ENCODE measurements at regions of chr4 and their contacts with region 1.

Region 1: DNA sequence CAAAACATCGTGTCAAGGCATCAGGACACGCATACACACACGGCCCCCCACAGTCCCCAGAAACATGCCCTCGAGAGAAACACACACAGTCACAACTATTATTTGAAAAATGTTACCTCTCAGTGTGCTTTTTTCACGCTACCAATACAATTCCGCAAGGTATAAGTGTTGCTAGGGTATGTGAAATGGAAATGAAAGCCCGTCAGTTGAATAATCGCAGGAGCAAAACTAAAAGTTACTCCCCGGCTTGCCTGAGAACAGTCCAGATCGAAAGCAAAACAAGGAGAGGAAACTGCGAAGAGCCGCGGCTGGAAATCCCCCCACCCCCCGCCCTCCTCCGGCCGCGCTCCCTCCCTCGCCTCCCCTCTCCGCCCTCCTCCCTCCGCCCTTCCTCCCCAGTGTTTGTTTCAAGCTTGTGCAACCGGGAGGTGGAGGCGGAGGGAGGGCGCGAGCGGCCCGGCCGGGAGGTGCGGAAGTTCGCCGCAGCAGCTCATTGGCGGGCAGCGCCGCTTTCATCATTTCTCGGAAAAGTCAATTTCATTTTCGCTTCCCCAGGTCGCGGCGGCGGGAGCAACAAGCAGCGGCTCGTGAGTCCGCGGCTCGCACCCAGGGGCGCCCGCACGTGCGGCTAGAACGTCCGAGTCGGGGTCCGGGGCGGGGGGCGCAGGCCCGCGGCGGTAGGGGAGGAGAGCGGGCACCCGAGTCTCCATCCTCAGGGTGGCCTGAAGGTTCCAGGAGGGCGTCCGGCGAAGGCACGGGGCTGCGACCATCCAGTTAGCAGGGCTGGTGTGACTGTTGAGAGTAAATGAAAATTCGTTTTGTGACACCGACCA is at the start of gene IRF2:
- DNase-seq: peak; percentile 98
- ATAC-seq: peak; percentile 90 to 94
- total RNA-seq, gene IRF2: 27.1 to 30.0 TPM

Region 2: DNA sequence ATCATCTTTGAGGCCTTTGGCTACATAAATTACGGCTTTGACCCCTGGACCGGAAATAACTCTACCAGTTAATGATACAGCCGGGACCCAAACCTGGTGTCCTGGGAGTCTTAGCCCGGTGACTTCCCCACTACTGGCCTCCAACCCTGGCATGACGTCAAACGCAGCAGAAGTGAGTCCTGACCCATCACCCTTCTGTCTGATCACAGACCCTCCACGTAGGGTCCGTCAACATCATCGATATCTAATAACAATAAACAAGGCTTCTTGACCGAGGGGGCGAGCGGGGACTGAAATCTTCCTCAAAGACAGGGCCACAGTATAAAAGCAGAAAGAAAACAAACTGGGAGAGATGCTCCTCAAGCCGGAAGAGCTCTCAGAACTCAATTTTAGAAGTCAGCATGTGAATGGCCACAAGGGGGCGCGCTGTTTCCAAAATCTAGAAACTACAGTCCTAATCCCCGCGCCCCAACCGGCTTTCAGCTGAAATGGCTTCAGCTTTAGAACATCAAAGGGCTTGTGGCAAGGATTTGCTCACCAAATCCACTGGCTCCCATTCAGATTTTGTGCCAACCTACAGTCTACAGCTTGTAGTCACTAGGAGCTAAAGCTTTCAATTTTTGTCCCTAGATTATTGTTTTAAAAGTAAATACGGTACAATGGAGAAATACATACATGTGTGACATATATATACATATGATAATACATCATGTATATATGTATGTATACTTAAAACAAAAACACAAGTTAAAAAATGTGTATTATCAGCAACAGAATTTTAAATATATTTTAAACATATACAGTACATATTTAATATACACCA is 210.4 kb before region 1 on chr4:
- intact Hi-C with region 1: loop called in 1 of 2 experiments (anchors 5 kb)
- DNase-seq: peak; percentile 94
- ATAC-seq: peak; percentile 78 to 84

Region 3: GRCh38 chr4:184280591-184281071 is 193.8 kb before region 1 on chr4:
- intact Hi-C with region 1: no loop called
- DNase-seq: no peak
- ATAC-seq: no peak

Region 4: GRCh38 chr4:184384056-184384809 is 90.2 kb before region 1 on chr4:
- intact Hi-C with region 1: loop called in 1 of 2 experiments (anchors 2 kb)
- DNase-seq: peak; percentile 61
- ATAC-seq: peak; percentile 73 to 81

Measured in left cardiac atrium (tissue), 4 donors.